ENCODE measurements at regions of chr1 and their contacts with region 1.

Region 1: DNA sequence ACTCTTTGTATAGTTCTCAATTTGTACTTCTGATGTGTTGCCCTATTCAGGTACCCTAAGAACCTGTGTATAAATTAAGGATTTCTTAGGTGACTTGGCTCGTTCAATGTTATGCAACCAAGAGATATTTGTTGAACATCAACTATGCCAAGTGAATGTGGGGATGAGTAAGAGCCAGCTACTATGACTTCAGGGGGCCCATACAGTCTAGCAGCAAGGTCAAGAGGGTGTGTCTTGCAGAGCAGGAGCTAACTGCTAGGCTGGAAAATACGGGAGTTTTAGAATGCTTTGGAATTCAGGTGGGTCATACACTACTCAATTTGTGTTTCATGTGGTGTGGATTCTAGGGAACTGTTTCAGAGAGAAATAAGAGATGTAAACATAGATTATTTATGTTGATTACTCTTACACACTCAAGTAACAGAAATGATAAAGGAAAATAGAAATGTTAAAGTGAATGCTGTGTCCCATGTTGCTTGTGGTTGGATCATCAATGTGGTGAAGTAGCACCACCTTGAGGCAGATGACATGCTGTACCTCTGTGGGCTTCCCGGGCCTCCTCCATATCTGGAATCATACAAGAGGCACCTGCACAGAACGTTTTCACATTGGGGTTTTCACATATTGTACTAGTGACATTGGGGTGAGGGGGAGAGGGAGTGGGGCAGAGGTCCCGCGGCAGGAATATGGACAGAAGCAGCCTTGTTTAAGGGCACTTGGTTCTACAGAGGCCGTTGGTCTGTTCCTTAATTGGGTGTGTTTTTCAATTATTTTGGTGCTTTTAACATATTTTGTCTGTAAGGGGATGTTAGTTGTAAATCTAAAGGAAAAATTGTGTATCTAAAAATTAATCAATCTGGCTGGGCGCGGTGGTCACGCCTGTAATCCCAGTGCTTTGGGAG is 12.4 kb downstream of the ARPC5 start:
- DNase-seq: peak; percentile 64
- ATAC-seq: peak; percentile 91
- H3K4me3 Mint-ChIP-seq: no peak overlapping the region
- H3K27ac Mint-ChIP-seq: peak overlapping the region; percentile 22
- H3K4me1 Mint-ChIP-seq: peaks cover 23% of the 10 kb centered on the region
- H3K27me3 Mint-ChIP-seq: no peaks in the 10 kb centered on the region
- CTCF ChIP-seq: peak; percentile 67

Region 2: GRCh38 chr1:183281553-183282091 is 341.5 kb before region 1 on chr1:
- CTCF ChIA-PET with region 1: interaction called, 8 read pairs
- POLR2A ChIA-PET with region 1: no interaction called
- intact Hi-C with region 1: loop called (anchors 5 kb)
- DNase-seq: peak; percentile 87
- ATAC-seq: peak; percentile 89
- H3K4me3 Mint-ChIP-seq: no peak overlapping the region
- H3K27ac Mint-ChIP-seq: no peak overlapping the region
- H3K4me1 Mint-ChIP-seq: no peaks in the 10 kb centered on the region
- H3K27me3 Mint-ChIP-seq: peaks cover 8% of the 10 kb centered on the region
- CTCF ChIP-seq: peak; percentile 88

Region 3: GRCh38 chr1:183551904-183552303 is 71.2 kb before region 1 on chr1:
- CTCF ChIA-PET with region 1: no interaction called
- POLR2A ChIA-PET with region 1: no interaction called
- intact Hi-C with region 1: loop called (anchors 5 kb)
- DNase-seq: no peak
- ATAC-seq: no peak
- H3K4me3 Mint-ChIP-seq: no peak overlapping the region
- H3K27ac Mint-ChIP-seq: no peak overlapping the region
- H3K4me1 Mint-ChIP-seq: no peaks in the 10 kb centered on the region
- H3K27me3 Mint-ChIP-seq: no peaks in the 10 kb centered on the region
- CTCF ChIP-seq: no peak